AG04450 (cell line): ENCODE measurements at regions of chr1 and their contacts with region 1.

Region 1: GRCh38 chr1:246647113-246647512 is 77.1 kb upstream of the SCCPDH start:
- DNase-seq: peak; percentile 33
- H3K4me3 ChIP-seq: peak overlapping the region; percentile 10
- H3K27ac ChIP-seq: peak overlapping the region; percentile 40
- H3K27me3 ChIP-seq: no peaks in the 10 kb centered on the region
- CTCF ChIP-seq: peak; percentile 88

Region 2: GRCh38 chr1:246532519-246532918 is 114.6 kb before region 1 on chr1:
- CTCF ChIA-PET with region 1: interaction called, 11 read pairs
- POLR2A ChIA-PET with region 1: no interaction called
- DNase-seq: no peak
- H3K4me3 ChIP-seq: no peak overlapping the region
- H3K27ac ChIP-seq: no peak overlapping the region
- H3K27me3 ChIP-seq: peaks cover 10% of the 10 kb centered on the region
- CTCF ChIP-seq: peak; percentile 22; the same call in 1 of the 2 replicates

Region 3: GRCh38 chr1:246923482-246923881 is 276.4 kb after region 1 on chr1:
- CTCF ChIA-PET with region 1: no interaction called
- POLR2A ChIA-PET with region 1: no interaction called
- DNase-seq: no peak
- H3K4me3 ChIP-seq: no peak overlapping the region
- H3K27ac ChIP-seq: no peak overlapping the region
- H3K27me3 ChIP-seq: no peaks in the 10 kb centered on the region
- CTCF ChIP-seq: no peak